ENCODE measurements at regions of chr22 and their contacts with region 1.

Region 1: GRCh38 chr22:36239401-36240171 is at the start of gene APOL2:
- DNase-seq: peak; percentile 94
- ATAC-seq: peak; percentile 96
- total RNA-seq, gene APOL2: 58.6 TPM

Region 2: DNA sequence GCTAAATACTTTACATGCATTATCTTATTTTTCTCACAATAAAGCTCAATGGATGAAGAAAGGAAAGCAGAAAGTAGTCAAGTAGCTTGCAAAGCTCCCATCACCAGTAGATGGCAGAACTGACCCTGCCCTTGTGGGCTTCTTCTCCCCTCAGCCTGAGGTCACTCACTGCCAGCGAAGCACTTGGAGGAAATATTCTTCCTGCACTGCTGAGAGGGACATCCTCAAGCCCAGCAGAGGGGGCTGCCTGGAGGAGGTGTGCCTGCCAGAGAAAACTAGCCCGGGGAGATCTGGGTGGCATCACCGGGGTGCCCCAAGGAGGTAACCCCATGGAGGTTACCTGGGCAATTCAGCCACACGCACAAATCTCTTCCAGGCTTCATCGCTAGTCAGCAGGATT is 44.6 kb before region 1 on chr22:
- intact Hi-C with region 1: loop called (anchors 5 kb)
- DNase-seq: peak; percentile 62
- ATAC-seq: peak; percentile 53